Activated naive CD4-positive, alpha-beta T cell treated with anti-CD3 and anti-CD28 coated beads for 36 hours (primary cell): ENCODE measurements at regions of chr20 and their contacts with region 1.

Region 1: DNA sequence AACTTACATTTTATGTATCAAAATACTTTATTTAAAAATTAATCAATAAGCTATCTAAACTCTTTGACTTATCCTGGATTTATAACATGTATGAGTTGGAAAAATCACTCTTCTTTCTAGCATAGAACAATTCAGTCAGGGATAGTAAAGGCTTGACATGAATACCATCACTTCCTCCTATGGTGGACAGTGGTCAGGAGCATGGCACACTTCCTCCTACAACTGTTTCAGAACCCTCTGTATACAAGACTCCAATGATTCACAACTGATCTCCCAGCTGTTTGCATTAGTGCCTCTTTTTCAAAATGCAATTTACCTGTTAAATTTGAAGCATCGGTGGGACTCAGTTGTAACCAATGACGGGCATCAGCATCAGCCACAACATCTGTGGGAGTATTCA is 129.7 kb downstream of the RALGAPA2 start:
- DNase-seq: no peak
- H3K4me3 Mint-ChIP-seq: no peak overlapping the region
- H3K27ac Mint-ChIP-seq: no peak overlapping the region
- H3K4me1 Mint-ChIP-seq: peaks cover 2% of the 10 kb centered on the region
- H3K27me3 Mint-ChIP-seq: no peaks in the 10 kb centered on the region

Region 2: GRCh38 chr20:20593447-20594170 is 10.9 kb after region 1 on chr20:
- CTCF ChIA-PET with region 1: interaction called, 10 read pairs
- intact Hi-C with region 1: no loop called
- DNase-seq: peak; percentile 30
- H3K4me3 Mint-ChIP-seq: no peak overlapping the region
- H3K27ac Mint-ChIP-seq: no peak overlapping the region
- H3K4me1 Mint-ChIP-seq: no peaks in the 10 kb centered on the region
- H3K27me3 Mint-ChIP-seq: no peaks in the 10 kb centered on the region